Heart left ventricle (tissue), 16 donors: ENCODE measurements at regions of chr2 and their contacts with region 1.

Region 1: GRCh38 chr2:75403991-75404428 is 156.7 kb downstream of the EVA1A start:
- DNase-seq: no peak
- ATAC-seq: peak in 3 of 4 donors; percentile 50 to 67 (median 63)
- H3K4me3 ChIP-seq: no peak overlapping the region
- H3K27ac ChIP-seq: no peak overlapping the region
- H3K4me1 ChIP-seq: no peaks in the 10 kb centered on the region
- H3K27me3 ChIP-seq: peaks cover 0 to 30% (median 4%) of the 10 kb centered on the region in 9 donors
- CTCF ChIP-seq: peak; percentile 65 to 88 (median 77)
- POLR2A ChIP-seq: no peak

Region 2: GRCh38 chr2:74690571-74690970 is 713.4 kb before region 1 on chr2:
- intact Hi-C with region 1: loop called in 4 of 10 experiments (anchors 5 to 10 kb)
- DNase-seq: no peak
- ATAC-seq: peak in 3 of 4 donors; percentile 73 to 86 (median 80)
- H3K4me3 ChIP-seq: no peak overlapping the region
- H3K27ac ChIP-seq: no peak overlapping the region
- H3K4me1 ChIP-seq: peaks cover 0 to 11% (median 0%) of the 10 kb centered on the region in 12 donors
- H3K27me3 ChIP-seq: peaks cover 0 to 8% (median 0%) of the 10 kb centered on the region in 9 donors
- CTCF ChIP-seq: peak; percentile 46 to 80 (median 63)
- POLR2A ChIP-seq: no peak

Region 3: DNA sequence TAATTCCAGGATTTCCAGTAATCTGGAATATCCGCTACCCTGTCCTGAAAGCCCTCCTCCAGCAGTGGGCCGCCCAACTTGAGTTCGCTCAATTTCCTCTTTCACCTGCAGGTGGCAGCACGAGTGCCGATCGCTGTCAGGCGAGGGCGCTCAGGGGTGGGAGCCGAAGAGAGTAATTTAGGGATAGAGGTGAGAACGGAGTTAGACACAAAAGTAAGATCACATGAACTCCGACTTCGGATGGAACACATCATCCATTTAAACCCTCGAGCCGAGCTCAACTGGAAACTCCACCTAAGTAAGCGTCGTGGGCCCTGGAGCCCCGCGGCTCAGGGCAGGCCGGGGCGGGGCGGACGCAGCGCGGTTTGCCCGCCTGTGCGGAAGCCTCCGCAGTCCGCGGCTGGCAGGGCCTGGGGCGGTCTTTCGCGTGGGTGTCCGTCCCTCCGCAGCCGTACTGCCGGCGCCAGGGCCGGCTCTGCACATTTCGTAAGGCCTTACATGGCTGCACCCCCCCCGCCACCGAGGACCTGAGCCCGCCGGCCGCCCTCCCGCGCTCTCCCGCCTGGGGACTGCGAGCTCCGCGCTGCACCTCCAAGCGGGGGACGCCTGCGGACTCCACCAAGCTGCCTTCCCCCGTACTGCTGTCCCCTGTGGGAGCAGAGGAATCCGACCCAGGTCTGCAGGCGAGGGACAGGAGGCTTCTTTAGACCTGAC is 688.8 kb before region 1 on chr2:
- intact Hi-C with region 1: loop called in 1 of 10 experiments (anchors 10 kb)
- DNase-seq: peak; percentile 77 to 88 (median 81)
- ATAC-seq: peak; percentile 82 to 98 (median 94)
- H3K4me3 ChIP-seq: peak overlapping the region; percentile 27 to 65 (median 60)
- H3K27ac ChIP-seq: peak overlapping the region in 3 of 12 donors; percentile 46 to 76 (median 53)
- H3K4me1 ChIP-seq: peaks cover 0 to 11% (median 3%) of the 10 kb centered on the region in 12 donors
- H3K27me3 ChIP-seq: peaks cover 0 to 37% (median 4%) of the 10 kb centered on the region in 9 donors
- CTCF ChIP-seq: peak; percentile 79 to 94 (median 90)
- POLR2A ChIP-seq: no peak

Region 4: DNA sequence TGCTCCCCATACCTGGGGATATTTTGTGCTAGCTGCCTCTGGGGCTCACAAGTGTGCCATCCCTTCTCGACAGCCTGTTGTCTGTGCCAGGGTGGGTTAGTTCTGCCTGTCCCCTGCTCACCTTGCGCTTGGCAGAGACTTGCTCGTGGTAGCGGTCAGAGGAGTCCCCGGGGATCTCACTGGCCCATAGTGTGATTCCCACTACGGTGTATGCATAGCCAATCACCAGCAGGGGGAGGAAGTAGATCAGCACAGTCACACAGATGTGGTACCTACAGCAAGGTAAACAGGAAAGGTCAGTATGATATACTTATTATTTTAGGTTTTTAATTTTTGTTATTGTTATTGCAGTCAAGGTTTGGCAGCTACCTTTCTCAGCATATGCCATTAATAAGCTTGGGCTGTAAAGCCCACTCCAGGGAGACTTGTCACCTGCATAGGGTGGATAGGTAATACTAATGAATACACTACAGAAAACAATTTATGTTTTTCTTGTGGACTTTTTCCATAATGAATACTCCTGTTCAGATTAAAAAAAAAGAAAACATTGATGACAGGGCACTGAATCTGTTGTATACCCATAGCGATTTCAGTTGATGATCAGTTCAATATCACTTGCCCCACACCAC is 350.4 kb before region 1 on chr2:
- intact Hi-C with region 1: loop called in 1 of 10 experiments (anchors 5 kb)
- DNase-seq: peak in 1 of 5 donors; percentile 35
- ATAC-seq: peak in 3 of 4 donors; percentile 44 to 57 (median 46)
- H3K4me3 ChIP-seq: no peak overlapping the region
- H3K27ac ChIP-seq: no peak overlapping the region
- H3K4me1 ChIP-seq: peaks cover 0 to 2% (median 0%) of the 10 kb centered on the region in 12 donors
- H3K27me3 ChIP-seq: no peaks in the 10 kb centered on the region
- CTCF ChIP-seq: peak; percentile 26 to 45 (median 38)
- POLR2A ChIP-seq: no peak

Region 5: DNA sequence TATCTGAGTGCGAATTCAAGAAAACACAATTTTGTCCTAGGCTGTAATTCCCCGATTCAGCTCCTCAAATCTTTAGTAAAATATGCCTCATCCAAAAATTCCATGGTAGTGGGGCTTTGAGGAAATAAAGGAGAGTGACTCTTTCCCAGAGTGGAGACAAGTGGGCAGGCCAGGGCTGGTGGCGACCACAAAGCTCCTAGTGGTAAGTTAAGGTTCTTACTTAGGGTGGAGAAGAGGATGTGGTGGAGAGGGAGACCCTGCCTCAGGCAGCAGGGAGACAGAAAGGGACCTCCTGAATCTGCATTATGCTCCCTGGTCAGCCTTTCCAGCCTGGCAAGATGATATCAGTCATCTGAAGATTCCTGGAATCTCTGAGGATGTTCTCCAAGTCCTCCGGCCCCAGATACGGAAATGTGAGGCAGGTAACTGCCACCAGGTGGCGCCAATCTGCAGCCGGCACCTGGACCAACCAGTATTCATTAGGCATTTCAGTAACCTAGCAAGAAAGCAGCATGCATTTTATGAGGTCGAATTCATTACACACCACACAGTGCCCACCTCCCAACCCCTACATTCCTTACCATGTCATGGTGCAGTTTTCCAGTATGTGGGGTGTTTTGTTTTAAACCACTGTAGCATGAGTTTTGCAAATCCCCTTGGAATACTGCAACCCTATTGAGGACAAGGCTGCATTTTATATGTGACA is 339.2 kb before region 1 on chr2:
- intact Hi-C with region 1: loop called in 7 of 10 experiments (anchors 2 to 10 kb)
- DNase-seq: peak in 3 of 5 donors; percentile 35 to 64 (median 37)
- ATAC-seq: no peak
- H3K4me3 ChIP-seq: no peak overlapping the region
- H3K27ac ChIP-seq: no peak overlapping the region
- H3K4me1 ChIP-seq: no peaks in the 10 kb centered on the region
- H3K27me3 ChIP-seq: no peaks in the 10 kb centered on the region
- CTCF ChIP-seq: peak; percentile 52 to 86 (median 70)
- POLR2A ChIP-seq: no peak

Region 6: GRCh38 chr2:75199428-75200011 is 204.5 kb before region 1 on chr2 and contains the start of gene TACR1:
- intact Hi-C with region 1: loop called in 2 of 10 experiments (anchors 2 to 10 kb)
- DNase-seq: peak; percentile 47 to 80 (median 61)
- ATAC-seq: peak; percentile 52 to 75 (median 74)
- H3K4me3 ChIP-seq: peak within 1 kb of the TSS in 11 of 12 donors; percentile 21 to 53 (median 44)
- H3K27ac ChIP-seq: peak within 1 kb of the TSS in 1 of 12 donors; percentile 43
- H3K4me1 ChIP-seq: peaks cover 4 to 23% (median 17%) of the 10 kb centered on the region in 12 donors
- H3K27me3 ChIP-seq: peaks cover 0 to 72% (median 13%) of the 10 kb centered on the region in 9 donors
- CTCF ChIP-seq: peak; percentile 36 to 69 (median 45)
- POLR2A ChIP-seq: no peak
- total RNA-seq, gene TACR1: 0.05 to 0.59 (median 0.38) TPM in 5 of 9 donors, not detected in the others

Region 7: DNA sequence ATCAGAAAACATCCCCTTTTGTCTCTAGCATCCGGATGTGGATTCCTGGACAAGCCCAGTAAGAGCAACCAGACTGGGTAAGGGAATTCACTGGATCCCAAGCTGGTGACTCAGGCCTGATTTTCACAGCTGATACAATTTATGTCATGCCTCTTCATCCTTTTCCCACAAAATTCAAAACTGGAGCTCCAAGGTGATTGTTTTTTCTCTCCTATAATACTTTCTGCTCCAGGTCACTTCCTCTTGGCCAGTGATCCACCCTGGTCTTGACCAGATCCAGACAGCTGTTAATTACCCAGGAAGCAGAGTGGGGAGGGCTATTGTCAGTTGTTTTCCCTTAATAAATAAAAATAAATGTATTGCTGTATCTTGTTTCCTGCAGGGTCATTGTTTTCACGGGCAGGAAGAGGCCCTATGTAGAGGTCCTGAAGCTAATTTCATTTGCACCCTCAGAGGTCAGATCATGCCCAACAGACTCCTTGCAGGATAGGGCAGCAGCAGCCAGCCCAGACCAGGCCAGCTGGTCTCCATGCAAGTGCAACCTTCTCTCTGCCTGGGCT is 99.1 kb after region 1 on chr2:
- intact Hi-C with region 1: no loop called
- DNase-seq: peak in 2 of 5 donors; percentile 11 to 25
- ATAC-seq: peak in 3 of 4 donors; percentile 66 to 87 (median 68)
- H3K4me3 ChIP-seq: no peak overlapping the region
- H3K27ac ChIP-seq: peak overlapping the region in 9 of 12 donors; percentile 21 to 59 (median 39)
- H3K4me1 ChIP-seq: peaks cover 0 to 20% (median 0%) of the 10 kb centered on the region in 12 donors
- H3K27me3 ChIP-seq: no peaks in the 10 kb centered on the region
- CTCF ChIP-seq: no peak
- POLR2A ChIP-seq: no peak